Mammary epithelial cell (primary cell): ENCODE measurements at regions of chr6 and their contacts with region 1.

Region 1: DNA sequence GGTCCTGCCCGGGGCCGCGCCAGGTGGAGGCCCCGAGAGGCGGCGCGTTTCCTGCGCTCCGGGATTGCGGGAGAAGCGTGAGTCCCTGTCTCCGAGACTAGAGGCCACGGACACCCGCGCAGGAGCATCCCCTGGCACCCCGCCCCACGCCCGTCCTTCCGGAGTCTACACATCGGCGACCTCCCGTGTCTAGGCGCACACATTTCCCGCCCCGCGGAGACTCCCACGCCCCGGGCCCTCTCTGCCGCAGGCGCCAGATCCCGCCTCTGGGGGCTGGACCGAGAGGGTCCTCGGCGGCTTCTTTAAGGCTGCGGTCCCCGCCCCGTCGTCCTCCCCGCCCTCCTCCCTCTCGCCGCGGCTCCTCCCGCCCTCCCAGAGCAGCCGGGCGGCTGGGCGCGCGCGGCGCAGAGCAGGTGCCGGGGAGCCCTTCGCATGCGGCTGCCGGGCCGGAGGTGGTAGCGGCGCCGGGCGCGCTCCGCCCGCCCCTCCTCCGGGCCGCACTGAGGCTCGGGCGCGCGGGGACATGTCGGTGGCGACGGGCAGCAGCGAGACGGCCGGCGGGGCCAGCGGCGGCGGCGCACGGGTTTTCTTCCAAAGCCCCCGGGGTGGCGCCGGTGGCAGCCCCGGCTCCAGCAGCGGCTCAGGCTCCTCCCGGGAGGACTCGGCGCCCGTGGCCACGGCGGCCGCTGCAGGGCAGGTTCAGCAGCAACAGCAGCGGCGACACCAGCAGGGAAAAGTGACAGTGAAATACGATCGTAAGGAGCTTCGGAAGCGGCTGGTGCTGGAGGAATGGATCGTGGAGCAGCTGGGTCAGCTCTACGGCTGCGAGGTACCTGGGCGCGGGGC is at the start of gene PPP1R14C:
- DNase-seq: peak; percentile 84
- H3K4me3 ChIP-seq: peak within 1 kb of the TSS; percentile 90 to 95 (median 91)
- H3K27ac ChIP-seq: peak within 1 kb of the TSS; percentile 73
- H3K4me1 ChIP-seq: peaks cover 26% of the 10 kb centered on the region
- H3K27me3 ChIP-seq: no peaks in the 10 kb centered on the region
- CTCF ChIP-seq: no peak
- total RNA-seq, gene PPP1R14C: 46.8 to 56.2 TPM

Region 2: GRCh38 chr6:150079604-150080003 is 63.3 kb before region 1 on chr6:
- CTCF ChIA-PET with region 1: interaction called, 3 read pairs
- dilution Hi-C with region 1: no loop called
- in situ Hi-C with region 1: no loop called
- intact Hi-C with region 1: loop called (anchors 2 kb)
- DNase-seq: no peak
- H3K4me3 ChIP-seq: no peak overlapping the region
- H3K27ac ChIP-seq: no peak overlapping the region
- H3K4me1 ChIP-seq: peaks cover 8% of the 10 kb centered on the region
- H3K27me3 ChIP-seq: no peaks in the 10 kb centered on the region
- CTCF ChIP-seq: no peak

Region 3: GRCh38 chr6:150184850-150185731 is 42.2 kb after region 1 on chr6:
- CTCF ChIA-PET with region 1: no interaction called
- dilution Hi-C with region 1: loop called (anchors 5 kb)
- in situ Hi-C with region 1: no loop called
- intact Hi-C with region 1: no loop called
- DNase-seq: no peak
- H3K4me3 ChIP-seq: no peak overlapping the region
- H3K27ac ChIP-seq: no peak overlapping the region
- H3K4me1 ChIP-seq: peaks cover 3% of the 10 kb centered on the region
- H3K27me3 ChIP-seq: no peaks in the 10 kb centered on the region
- CTCF ChIP-seq: no peak

Region 4: GRCh38 chr6:150229775-150230561 is 87.1 kb after region 1 on chr6:
- CTCF ChIA-PET with region 1: no interaction called
- dilution Hi-C with region 1: loop called (anchors 5 kb)
- in situ Hi-C with region 1: no loop called
- intact Hi-C with region 1: no loop called
- DNase-seq: peak; percentile 85
- H3K4me3 ChIP-seq: no peak overlapping the region
- H3K27ac ChIP-seq: peak overlapping the region; percentile 45
- H3K4me1 ChIP-seq: peaks cover 45% of the 10 kb centered on the region
- H3K27me3 ChIP-seq: no peaks in the 10 kb centered on the region
- CTCF ChIP-seq: no peak

Region 5: DNA sequence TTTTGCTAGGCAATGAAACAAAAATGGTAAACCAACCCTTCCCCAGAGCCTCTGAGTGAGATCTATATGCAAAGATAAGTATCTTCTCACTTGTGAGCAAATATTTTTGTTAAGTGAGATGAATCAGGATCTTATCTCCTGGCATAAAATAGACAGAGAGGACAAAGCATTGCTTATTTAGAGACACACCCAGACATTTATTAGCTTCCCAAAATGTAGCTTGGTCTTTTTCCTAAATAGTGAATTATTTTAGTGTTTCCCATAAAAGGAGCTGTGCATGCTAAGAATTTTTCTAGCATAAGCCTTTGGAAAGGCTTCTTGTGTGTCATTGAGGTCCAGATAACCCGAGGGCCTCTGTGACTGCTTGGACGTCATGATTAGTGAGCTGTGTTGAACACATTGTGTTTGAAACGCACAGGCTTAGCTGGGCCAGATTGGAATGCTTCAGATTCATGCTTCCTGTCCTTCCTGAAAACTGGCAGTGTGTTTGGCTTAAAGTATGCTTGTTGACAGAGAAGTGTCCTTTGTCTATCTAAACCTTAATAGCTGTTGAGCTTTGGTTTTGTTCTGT is 739.1 kb after region 1 on chr6:
- CTCF ChIA-PET with region 1: no interaction called
- dilution Hi-C with region 1: no loop called
- in situ Hi-C with region 1: no loop called
- intact Hi-C with region 1: no loop called
- DNase-seq: peak; percentile 84
- H3K4me3 ChIP-seq: no peak overlapping the region
- H3K27ac ChIP-seq: peak overlapping the region; percentile 64
- H3K4me1 ChIP-seq: peaks cover 18% of the 10 kb centered on the region
- H3K27me3 ChIP-seq: no peaks in the 10 kb centered on the region
- CTCF ChIP-seq: no peak